Activated CD4-positive, alpha-beta memory T cell treated with anti-CD3 and anti-CD28 coated beads for 36 hours (primary cell): ENCODE measurements at regions of chr14 and their contacts with region 1.

Region 1: DNA sequence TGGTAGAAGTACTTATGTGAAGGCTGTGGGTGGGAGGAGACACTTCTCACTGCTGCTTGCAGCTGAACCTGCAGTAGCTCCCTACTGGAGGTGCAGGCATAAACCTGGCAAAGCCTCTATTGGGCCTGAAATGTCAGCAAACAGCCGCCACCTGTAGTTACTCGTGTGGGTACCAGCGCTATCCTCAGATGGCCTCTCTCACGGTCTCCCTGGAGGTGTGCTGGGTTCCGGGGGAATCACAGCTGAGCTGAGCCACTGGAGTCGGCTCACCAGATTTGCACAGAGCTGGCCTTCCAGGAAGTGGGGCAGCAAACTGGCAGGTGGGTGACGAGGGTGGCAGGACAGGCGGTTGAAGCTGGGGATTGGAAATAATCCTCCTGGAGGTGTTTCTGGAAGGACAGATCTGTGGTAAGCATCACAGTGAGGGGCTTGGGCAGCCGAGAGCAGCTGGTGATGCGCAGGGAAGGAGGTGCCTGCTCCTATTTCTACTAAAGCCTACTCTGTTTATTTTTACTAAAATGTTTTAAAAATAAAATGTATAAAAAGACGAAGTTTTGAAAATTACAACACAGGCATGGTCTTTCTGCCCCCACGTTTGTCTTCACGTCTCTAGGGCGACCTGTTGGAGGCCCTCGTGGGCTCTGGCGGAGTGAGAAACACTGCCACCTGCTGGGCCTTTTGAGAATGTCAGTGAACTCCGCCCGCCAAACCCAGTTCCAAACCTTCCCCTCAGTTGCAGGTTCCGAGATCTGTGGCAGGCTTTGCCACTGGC is 67.8 kb upstream of the PLEKHG3 start:
- DNase-seq: peak; percentile 82
- H3K4me3 Mint-ChIP-seq: no peak overlapping the region
- H3K27ac Mint-ChIP-seq: no peak overlapping the region
- H3K4me1 Mint-ChIP-seq: no peaks in the 10 kb centered on the region
- H3K27me3 Mint-ChIP-seq: peaks cover 2% of the 10 kb centered on the region

Region 2: GRCh38 chr14:64410084-64410774 is 226.2 kb before region 1 on chr14:
- CTCF ChIA-PET with region 1: no interaction called
- POLR2A ChIA-PET with region 1: no interaction called
- intact Hi-C with region 1: no loop called
- DNase-seq: no peak
- H3K4me3 Mint-ChIP-seq: no peak overlapping the region
- H3K27ac Mint-ChIP-seq: no peak overlapping the region
- H3K4me1 Mint-ChIP-seq: peaks cover 12% of the 10 kb centered on the region
- H3K27me3 Mint-ChIP-seq: no peaks in the 10 kb centered on the region

Region 3: GRCh38 chr14:64465191-64465822 is 171.1 kb before region 1 on chr14 and contains the start of gene AKAP5:
- CTCF ChIA-PET with region 1: interaction called, 3 read pairs
- POLR2A ChIA-PET with region 1: no interaction called
- intact Hi-C with region 1: loop called (anchors 10 kb)
- DNase-seq: peak; percentile 69
- H3K4me3 Mint-ChIP-seq: peak within 1 kb of the TSS; percentile 75
- H3K27ac Mint-ChIP-seq: peak within 1 kb of the TSS; percentile 3
- H3K4me1 Mint-ChIP-seq: peaks cover 37% of the 10 kb centered on the region
- H3K27me3 Mint-ChIP-seq: no peaks in the 10 kb centered on the region
- total RNA-seq, gene AKAP5: 0.74 to 1.1 TPM

Region 4: DNA sequence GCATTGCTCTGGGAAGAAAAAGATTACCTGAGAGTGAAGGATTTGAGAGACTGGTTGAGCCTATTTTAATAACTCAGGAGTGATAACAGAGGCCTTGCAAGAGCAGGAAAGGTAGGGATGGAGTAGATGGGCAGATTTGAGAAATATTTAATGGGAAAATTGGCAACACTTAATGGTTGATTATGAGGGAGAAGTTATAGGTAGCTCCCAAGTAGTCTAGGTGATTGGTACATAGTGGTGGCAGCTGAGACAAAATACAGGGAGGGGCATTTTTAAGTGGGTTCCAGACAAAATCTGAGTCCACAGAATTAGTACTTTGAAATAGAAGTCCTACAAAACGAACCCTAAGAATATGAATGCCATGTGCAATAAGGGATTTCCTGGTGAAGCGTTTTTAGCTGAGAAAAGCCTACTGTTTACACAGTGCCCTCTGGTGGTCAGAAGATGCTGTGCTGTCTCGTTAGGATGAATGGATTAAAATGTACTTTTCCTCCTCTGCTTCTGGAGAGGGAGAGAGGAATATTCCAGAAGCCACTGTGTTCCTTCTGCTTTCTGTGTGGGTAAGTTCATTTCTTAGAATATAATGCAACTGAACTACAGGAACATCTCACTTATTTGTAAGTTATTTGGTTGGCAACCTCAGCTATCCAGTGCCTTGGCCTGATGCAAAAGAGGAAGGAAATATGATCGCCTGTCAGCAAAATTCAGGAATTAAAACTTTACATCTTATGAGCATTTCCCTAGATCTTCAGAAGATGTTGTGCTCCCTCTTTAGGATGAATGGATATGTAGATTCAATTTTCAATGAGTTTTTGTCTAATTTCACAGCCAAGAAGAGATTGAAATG is 125.3 kb before region 1 on chr14:
- CTCF ChIA-PET with region 1: interaction called, 14 read pairs
- POLR2A ChIA-PET with region 1: no interaction called
- intact Hi-C with region 1: no loop called
- DNase-seq: peak; percentile 74
- H3K4me3 Mint-ChIP-seq: peak overlapping the region; percentile 50
- H3K27ac Mint-ChIP-seq: peak overlapping the region; percentile 78
- H3K4me1 Mint-ChIP-seq: peaks cover 70% of the 10 kb centered on the region
- H3K27me3 Mint-ChIP-seq: no peaks in the 10 kb centered on the region

Region 5: DNA sequence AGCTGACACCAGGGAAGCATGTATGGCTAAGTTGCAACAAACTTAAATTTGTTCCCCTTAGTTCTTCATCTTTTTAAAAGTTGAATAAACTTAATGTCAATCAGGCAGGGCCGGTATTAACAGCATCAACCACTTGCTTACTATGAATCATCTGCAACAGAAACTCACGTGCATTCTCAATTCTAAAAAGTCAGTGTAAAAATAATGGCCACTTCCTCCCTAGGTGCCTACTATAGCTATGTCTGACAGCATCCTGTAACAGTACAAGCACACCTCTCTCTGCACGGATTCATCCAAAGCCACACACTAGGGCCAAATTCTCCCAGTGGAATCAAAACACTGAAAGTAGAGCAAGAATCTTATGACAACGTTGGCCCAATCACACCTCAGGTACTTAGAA is 38.0 kb before region 1 on chr14:
- CTCF ChIA-PET with region 1: no interaction called
- POLR2A ChIA-PET with region 1: no interaction called
- intact Hi-C with region 1: no loop called
- DNase-seq: no peak
- H3K4me3 Mint-ChIP-seq: no peak overlapping the region
- H3K27ac Mint-ChIP-seq: no peak overlapping the region
- H3K4me1 Mint-ChIP-seq: no peaks in the 10 kb centered on the region
- H3K27me3 Mint-ChIP-seq: peaks cover 11% of the 10 kb centered on the region

Region 6: GRCh38 chr14:64612021-64612380 is 24.4 kb before region 1 on chr14:
- CTCF ChIA-PET with region 1: interaction called, 12 read pairs
- POLR2A ChIA-PET with region 1: no interaction called
- intact Hi-C with region 1: no loop called
- DNase-seq: no peak
- H3K4me3 Mint-ChIP-seq: no peak overlapping the region
- H3K27ac Mint-ChIP-seq: no peak overlapping the region
- H3K4me1 Mint-ChIP-seq: no peaks in the 10 kb centered on the region
- H3K27me3 Mint-ChIP-seq: no peaks in the 10 kb centered on the region

Region 7: DNA sequence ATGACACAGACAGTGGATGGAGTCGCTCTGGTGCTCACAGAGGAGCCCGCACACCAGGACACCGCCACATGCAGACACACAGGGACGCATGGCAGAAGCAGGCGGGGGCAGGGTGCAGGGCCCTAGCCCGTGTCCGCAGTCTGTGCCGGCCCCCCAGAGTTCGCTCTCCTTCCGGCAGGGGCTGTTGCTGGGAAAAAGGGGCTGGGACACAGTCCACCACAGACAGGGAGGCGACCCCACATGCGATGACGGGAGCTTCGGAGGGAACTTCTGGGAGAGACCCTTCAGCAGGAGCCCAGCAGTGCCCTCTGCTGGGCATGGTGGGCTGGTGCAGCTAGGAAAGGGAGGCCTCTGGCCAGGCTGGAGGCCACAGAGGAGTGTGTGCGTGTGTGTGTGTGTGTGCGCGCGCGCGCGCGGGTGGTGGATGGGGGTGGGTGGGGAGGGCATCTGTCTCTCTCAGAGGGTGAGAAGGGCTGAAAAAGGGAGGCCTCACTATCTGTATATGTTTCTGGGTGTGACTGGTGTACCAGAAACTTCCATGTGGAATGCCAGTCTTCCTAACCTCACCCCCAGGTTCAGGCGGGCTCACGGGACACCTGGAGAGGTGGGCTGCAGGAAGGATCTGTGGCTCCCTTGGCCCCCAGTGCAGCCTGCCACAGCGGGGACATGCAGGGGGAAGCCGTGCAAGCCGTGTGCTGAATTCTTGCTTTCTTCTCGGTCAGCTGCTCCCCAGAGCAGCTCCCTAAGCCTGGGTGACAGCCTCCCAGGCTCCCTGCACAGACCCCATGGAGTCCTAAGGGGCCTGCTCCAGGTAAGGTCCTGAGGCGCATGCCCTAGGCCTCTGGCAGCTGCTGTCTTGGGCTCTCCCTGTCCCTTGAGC is 128.5 kb after region 1 on chr14:
- CTCF ChIA-PET with region 1: interaction called, 10 read pairs
- POLR2A ChIA-PET with region 1: no interaction called
- intact Hi-C with region 1: no loop called
- DNase-seq: peak; percentile 80
- H3K4me3 Mint-ChIP-seq: peak overlapping the region; percentile 49
- H3K27ac Mint-ChIP-seq: no peak overlapping the region
- H3K4me1 Mint-ChIP-seq: peaks cover 55% of the 10 kb centered on the region
- H3K27me3 Mint-ChIP-seq: no peaks in the 10 kb centered on the region